Dendritic cell treated with granulocyte-macrophage colony-stimulating factor and Interleukin-4, amounts not matched to agents 40 ng/mL and 50 ng/mL, for 4 days (primary cell): ENCODE measurements at regions of chr5 and their contacts with region 1.

Region 1: GRCh38 chr5:7927466-7928375 is 58.8 kb downstream of the MTRR start:
- H3K4me3 Mint-ChIP-seq: no peak overlapping the region
- H3K27ac Mint-ChIP-seq: no peak overlapping the region
- H3K4me1 Mint-ChIP-seq: no peaks in the 10 kb centered on the region
- H3K27me3 Mint-ChIP-seq: peaks cover 13% of the 10 kb centered on the region

Region 2: GRCh38 chr5:8114597-8115266 is 187.0 kb after region 1 on chr5:
- intact Hi-C with region 1: no loop called
- H3K4me3 Mint-ChIP-seq: no peak overlapping the region
- H3K27ac Mint-ChIP-seq: no peak overlapping the region
- H3K4me1 Mint-ChIP-seq: no peaks in the 10 kb centered on the region
- H3K27me3 Mint-ChIP-seq: no peaks in the 10 kb centered on the region

Region 3: GRCh38 chr5:9207817-9208418 is 1280.2 kb after region 1 on chr5:
- intact Hi-C with region 1: loop called (anchors 1 kb)
- H3K4me3 Mint-ChIP-seq: no peak overlapping the region
- H3K27ac Mint-ChIP-seq: no peak overlapping the region
- H3K4me1 Mint-ChIP-seq: no peaks in the 10 kb centered on the region
- H3K27me3 Mint-ChIP-seq: no peaks in the 10 kb centered on the region

Region 4: GRCh38 chr5:9544502-9545135 is 1616.9 kb after region 1 on chr5:
- intact Hi-C with region 1: loop called (anchors 2 kb)
- H3K4me3 Mint-ChIP-seq: no peak overlapping the region
- H3K27ac Mint-ChIP-seq: no peak overlapping the region
- H3K4me1 Mint-ChIP-seq: peaks cover 4% of the 10 kb centered on the region
- H3K27me3 Mint-ChIP-seq: peaks cover 51% of the 10 kb centered on the region